A549 (cell line): ENCODE measurements at regions of chr6 and their contacts with region 1.

Region 1: GRCh38 chr6:108492131-108492766 is 68.5 kb upstream of the FOXO3 start:
- DNase-seq: peak; percentile 6 to 38
- ATAC-seq: peak; percentile 64 to 65; a peak in 3 of 6 replicates
- H3K4me3 ChIP-seq: no peak overlapping the region
- H3K27ac ChIP-seq: no peak overlapping the region
- H3K4me1 ChIP-seq: no peaks in the 10 kb centered on the region
- CTCF ChIP-seq: peak; percentile 69
- EP300 ChIP-seq: no peak
- POLR2A ChIP-seq: no peak
- RAD21 ChIP-seq: peak; percentile 68 to 70

Region 2: GRCh38 chr6:108105571-108105970 is 386.7 kb before region 1 on chr6:
- CTCF ChIA-PET with region 1: interaction called, 19 read pairs
- POLR2A ChIA-PET with region 1: no interaction called
- DNase-seq: no peak
- ATAC-seq: no peak
- H3K4me3 ChIP-seq: no peak overlapping the region
- H3K27ac ChIP-seq: no peak overlapping the region
- H3K4me1 ChIP-seq: no peaks in the 10 kb centered on the region
- CTCF ChIP-seq: no peak
- EP300 ChIP-seq: no peak
- POLR2A ChIP-seq: no peak
- RAD21 ChIP-seq: no peak

Region 3: DNA sequence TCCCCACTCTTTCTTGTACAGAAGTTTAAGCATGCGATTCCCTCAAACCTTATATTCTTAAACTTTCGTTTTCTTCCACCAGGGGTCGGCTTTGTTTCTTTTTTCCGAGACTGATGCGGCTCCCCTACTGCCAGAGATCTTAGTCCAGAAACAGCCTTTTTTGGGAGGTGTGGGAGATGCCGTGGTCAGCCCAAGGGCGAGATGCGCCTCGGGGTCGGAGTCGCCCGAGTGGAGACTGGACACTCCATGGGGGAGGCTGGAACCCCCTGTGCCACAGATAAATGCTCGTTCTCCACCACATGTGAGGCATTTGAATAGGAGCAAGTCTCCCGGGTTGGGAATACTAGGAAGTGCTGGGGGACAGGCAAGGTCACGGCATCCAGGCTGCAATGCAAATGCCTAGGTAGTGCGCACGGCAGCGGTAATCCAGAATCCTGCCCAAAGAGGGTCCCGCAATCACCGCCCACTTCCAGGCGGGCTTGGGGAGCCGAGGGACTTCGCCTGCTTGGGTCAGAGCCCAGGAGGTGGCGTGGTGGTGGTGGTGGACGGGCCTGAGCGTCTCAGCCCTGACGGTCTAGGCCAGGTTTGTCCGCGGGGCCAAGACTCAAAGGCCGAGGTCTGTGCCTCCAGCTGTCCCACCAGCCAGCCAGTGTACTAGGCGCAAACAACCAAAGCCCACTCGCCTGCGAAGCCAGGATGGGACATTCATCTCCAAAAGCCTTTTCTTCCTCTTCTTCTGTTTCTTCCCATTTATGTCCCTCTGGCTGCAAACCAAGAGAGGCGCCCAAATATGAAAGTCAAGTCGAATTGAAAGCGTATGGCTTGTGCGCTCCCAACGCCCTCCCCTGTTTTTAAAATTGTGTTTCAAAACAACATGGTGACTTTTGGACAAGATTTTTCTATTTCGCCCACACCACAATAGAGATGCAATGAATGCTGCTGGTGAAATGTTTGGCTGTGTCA is 378.4 kb before region 1 on chr6:
- CTCF ChIA-PET with region 1: interaction called, 57 read pairs
- POLR2A ChIA-PET with region 1: interaction called, 3 read pairs
- DNase-seq: peak; percentile 34 to 74
- ATAC-seq: peak; percentile 22 to 66; a peak in 3 of 6 replicates
- H3K4me3 ChIP-seq: 0 out of 3 replicates have a peak overlapping the region, but pooled peaks have one; percentile 29
- H3K27ac ChIP-seq: no peak overlapping the region
- H3K4me1 ChIP-seq: peaks cover 3% of the 10 kb centered on the region; the same call in 1 of the 3 replicates
- CTCF ChIP-seq: peak; percentile 65
- EP300 ChIP-seq: no peak
- POLR2A ChIP-seq: no peak
- RAD21 ChIP-seq: peak; percentile 79

Region 4: DNA sequence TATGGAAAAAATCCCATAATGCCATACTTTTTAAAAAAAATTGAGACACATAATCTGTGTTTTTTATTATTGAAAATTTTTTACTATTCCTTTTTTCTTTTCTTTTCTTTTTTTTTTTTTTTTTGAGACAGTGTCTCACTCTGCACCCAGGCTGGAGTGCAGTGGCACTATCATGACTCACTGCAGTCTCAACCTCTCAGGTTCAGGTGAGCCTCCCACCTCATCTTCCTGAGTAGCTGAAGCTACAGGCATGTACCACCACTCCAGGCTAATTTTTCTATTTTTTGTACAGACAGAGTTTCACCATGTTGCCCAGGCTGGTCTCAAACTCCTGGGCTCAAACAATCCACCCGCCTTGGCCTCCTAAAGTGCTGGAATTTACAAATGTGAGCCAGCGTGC is 97.0 kb before region 1 on chr6:
- CTCF ChIA-PET with region 1: no interaction called
- POLR2A ChIA-PET with region 1: no interaction called
- DNase-seq: no peak
- ATAC-seq: no peak
- H3K4me3 ChIP-seq: no peak overlapping the region
- H3K27ac ChIP-seq: no peak overlapping the region
- H3K4me1 ChIP-seq: no peaks in the 10 kb centered on the region
- CTCF ChIP-seq: no peak
- EP300 ChIP-seq: no peak
- POLR2A ChIP-seq: no peak
- RAD21 ChIP-seq: no peak

Region 5: DNA sequence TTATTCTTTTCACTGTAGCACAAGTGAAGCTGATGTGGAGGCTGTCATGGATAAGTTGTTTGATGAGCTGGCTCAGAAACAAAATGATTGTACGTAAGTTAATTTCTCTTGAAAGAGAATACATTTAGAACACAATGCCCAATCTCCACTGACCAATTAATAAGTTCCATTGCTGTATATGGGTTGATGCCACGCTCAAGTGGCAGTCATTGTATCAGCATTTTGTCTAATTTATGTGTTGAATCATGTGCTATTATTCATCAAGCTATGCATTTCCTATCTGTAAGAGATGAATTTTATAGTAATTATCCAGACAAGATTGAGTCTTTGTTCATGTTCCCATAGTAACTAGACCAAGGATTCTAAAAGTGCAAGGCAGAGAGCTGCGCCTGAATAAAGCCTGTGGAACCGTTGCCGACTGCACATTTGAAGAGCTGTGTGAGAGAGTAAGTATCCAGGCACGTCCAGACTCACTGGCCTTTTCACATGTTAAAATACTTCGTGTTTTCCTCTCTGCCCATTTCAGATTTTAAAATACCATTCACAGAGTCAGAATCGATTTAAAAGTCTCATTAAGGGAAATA is 15.3 kb before region 1 on chr6:
- CTCF ChIA-PET with region 1: interaction called, 14 read pairs
- POLR2A ChIA-PET with region 1: no interaction called
- DNase-seq: no peak
- ATAC-seq: no peak
- H3K4me3 ChIP-seq: no peak overlapping the region
- H3K27ac ChIP-seq: no peak overlapping the region
- H3K4me1 ChIP-seq: no peaks in the 10 kb centered on the region
- CTCF ChIP-seq: no peak
- EP300 ChIP-seq: no peak
- POLR2A ChIP-seq: no peak
- RAD21 ChIP-seq: no peak

Region 6: DNA sequence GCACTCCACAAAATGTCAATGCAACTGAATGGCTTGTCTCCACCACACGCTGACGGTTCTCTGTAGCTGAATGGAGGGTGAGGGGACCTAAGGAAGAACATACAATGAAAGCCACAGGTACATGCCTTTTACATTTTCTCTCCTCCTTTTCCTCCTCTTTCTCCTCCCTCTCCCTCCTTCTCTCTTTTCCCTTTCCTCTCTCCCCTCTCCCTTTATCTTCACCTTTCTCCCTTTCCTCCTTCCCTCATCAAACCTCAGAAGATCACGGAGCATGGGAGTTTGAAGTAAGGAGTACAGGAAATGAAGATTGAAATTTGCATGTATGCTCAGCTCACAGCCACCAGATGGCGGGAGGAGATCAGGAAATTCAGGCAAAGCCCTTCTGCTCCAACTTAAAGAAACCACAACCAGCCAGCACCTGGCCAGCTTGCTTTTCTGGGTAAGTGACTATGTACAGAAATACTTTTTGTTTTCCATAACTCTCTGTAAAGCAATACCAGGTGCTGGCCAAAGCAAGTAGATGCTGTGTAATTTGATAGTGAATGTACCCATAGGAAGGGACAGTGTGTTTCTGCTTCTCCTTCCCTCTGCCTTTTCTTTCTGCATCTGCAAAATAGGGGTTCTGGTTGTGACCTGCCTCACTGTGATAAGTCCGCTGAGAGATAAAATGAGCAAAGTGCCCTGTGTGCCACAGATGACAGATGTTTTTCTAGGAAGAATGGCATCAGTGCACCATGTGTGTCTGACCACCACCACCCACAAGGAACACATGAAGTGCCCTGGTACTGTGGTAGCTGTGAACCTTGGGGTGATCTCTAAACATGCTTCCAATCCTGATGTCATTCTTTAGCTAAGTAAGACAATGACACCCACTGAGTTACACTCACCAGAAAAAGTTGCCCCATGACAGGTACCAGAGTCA is 49.9 kb after region 1 on chr6:
- CTCF ChIA-PET with region 1: no interaction called
- POLR2A ChIA-PET with region 1: no interaction called
- DNase-seq: peak; percentile 40 to 73
- ATAC-seq: peak; percentile 87 to 95
- H3K4me3 ChIP-seq: peak overlapping the region; percentile 16; the same call in 2 of the 3 replicates
- H3K27ac ChIP-seq: no peak overlapping the region
- H3K4me1 ChIP-seq: no peaks in the 10 kb centered on the region
- CTCF ChIP-seq: peak; percentile 92
- EP300 ChIP-seq: no peak
- POLR2A ChIP-seq: no peak
- RAD21 ChIP-seq: peak; percentile 92 to 96